ENCODE measurements at regions of chr2 and their contacts with region 1.

Region 1: GRCh38 chr2:187581125-187581896 is 27.1 kb upstream of the TFPI start:
- DNase-seq: no peak
- H3K4me3 ChIP-seq: peak overlapping the region; percentile 32 to 33
- H3K27ac ChIP-seq: peak overlapping the region in 1 of 2 donors; percentile 11
- H3K4me1 ChIP-seq: peaks cover 0 to 4% (median 0%) of the 10 kb centered on the region in 4 donors
- H3K27me3 ChIP-seq: no peaks in the 10 kb centered on the region
- CTCF ChIP-seq: peak; percentile 63 to 80

Region 2: GRCh38 chr2:187529977-187530721 is 51.2 kb before region 1 on chr2:
- intact Hi-C with region 1: no loop called
- DNase-seq: no peak
- H3K4me3 ChIP-seq: no peak overlapping the region
- H3K27ac ChIP-seq: peak overlapping the region in 1 of 2 donors; percentile 27
- H3K4me1 ChIP-seq: peaks cover 0 to 50% (median 14%) of the 10 kb centered on the region in 4 donors
- H3K27me3 ChIP-seq: no peaks in the 10 kb centered on the region
- CTCF ChIP-seq: no peak

Region 3: DNA sequence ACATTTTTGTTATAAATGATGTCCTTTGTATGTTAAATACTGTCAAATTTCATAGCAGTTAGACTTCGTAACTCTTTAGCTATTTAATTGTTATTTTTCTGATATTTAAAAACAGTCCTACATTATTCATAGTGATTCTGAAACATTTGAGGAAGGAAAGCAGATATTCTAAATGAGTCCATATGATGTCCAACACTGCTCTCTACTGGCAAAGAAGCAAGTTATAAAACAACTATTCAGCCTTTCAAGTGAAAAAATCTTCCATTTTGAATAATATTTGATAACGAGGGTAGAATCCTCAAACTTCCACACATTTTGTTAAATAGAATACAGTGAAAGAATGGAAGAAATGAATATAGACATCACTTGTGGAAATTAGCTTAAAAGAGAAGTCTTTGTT is 931.1 kb after region 1 on chr2:
- intact Hi-C with region 1: loop called (anchors 10 kb)
- DNase-seq: no peak
- H3K4me3 ChIP-seq: no peak overlapping the region
- H3K27ac ChIP-seq: no peak overlapping the region
- H3K4me1 ChIP-seq: peaks cover 0 to 18% (median 4%) of the 10 kb centered on the region in 4 donors
- H3K27me3 ChIP-seq: no peaks in the 10 kb centered on the region
- CTCF ChIP-seq: peak; percentile 44 to 66